ENCODE measurements at regions of chr3 and their contacts with region 1.

Region 1: GRCh38 chr3:108477511-108478147 is 32.8 kb downstream of the MYH15 start:
- DNase-seq: peak; percentile 72
- ATAC-seq: peak; percentile 77
- H3K4me3 ChIP-seq: no peak overlapping the region
- H3K4me3 Mint-ChIP-seq: no peak overlapping the region
- H3K27ac ChIP-seq: no peak overlapping the region
- H3K27ac Mint-ChIP-seq: no peak overlapping the region
- H3K4me1 ChIP-seq: peaks cover 4 to 6% of the 10 kb centered on the region in 2 donors
- H3K4me1 Mint-ChIP-seq: peaks cover 12% of the 10 kb centered on the region
- H3K27me3 ChIP-seq: no peaks in the 10 kb centered on the region
- H3K27me3 Mint-ChIP-seq: peaks cover 4% of the 10 kb centered on the region
- CTCF ChIP-seq: peak; percentile 89

Region 2: GRCh38 chr3:107660306-107660976 is 817.2 kb before region 1 on chr3:
- CTCF ChIA-PET with region 1: interaction called, 20 read pairs
- POLR2A ChIA-PET with region 1: no interaction called
- intact Hi-C with region 1: no loop called
- DNase-seq: peak; percentile 51
- ATAC-seq: no peak
- H3K4me3 ChIP-seq: no peak overlapping the region
- H3K4me3 Mint-ChIP-seq: no peak overlapping the region
- H3K27ac ChIP-seq: no peak overlapping the region
- H3K27ac Mint-ChIP-seq: no peak overlapping the region
- H3K4me1 ChIP-seq: peaks cover 8% of the 10 kb centered on the region in 2 donors
- H3K4me1 Mint-ChIP-seq: peaks cover 25% of the 10 kb centered on the region
- H3K27me3 ChIP-seq: no peaks in the 10 kb centered on the region
- H3K27me3 Mint-ChIP-seq: no peaks in the 10 kb centered on the region
- CTCF ChIP-seq: peak; percentile 83

Region 3: GRCh38 chr3:107690522-107691138 is 787.0 kb before region 1 on chr3:
- CTCF ChIA-PET with region 1: interaction called, 4 read pairs
- POLR2A ChIA-PET with region 1: no interaction called
- intact Hi-C with region 1: loop called (anchors 2 kb)
- DNase-seq: peak; percentile 66
- ATAC-seq: peak; percentile 64
- H3K4me3 ChIP-seq: no peak overlapping the region
- H3K4me3 Mint-ChIP-seq: no peak overlapping the region
- H3K27ac ChIP-seq: no peak overlapping the region
- H3K27ac Mint-ChIP-seq: no peak overlapping the region
- H3K4me1 ChIP-seq: peaks cover 0 to 2% of the 10 kb centered on the region in 2 donors
- H3K4me1 Mint-ChIP-seq: peaks cover 6% of the 10 kb centered on the region
- H3K27me3 ChIP-seq: no peaks in the 10 kb centered on the region
- H3K27me3 Mint-ChIP-seq: no peaks in the 10 kb centered on the region
- CTCF ChIP-seq: peak; percentile 70

Region 4: DNA sequence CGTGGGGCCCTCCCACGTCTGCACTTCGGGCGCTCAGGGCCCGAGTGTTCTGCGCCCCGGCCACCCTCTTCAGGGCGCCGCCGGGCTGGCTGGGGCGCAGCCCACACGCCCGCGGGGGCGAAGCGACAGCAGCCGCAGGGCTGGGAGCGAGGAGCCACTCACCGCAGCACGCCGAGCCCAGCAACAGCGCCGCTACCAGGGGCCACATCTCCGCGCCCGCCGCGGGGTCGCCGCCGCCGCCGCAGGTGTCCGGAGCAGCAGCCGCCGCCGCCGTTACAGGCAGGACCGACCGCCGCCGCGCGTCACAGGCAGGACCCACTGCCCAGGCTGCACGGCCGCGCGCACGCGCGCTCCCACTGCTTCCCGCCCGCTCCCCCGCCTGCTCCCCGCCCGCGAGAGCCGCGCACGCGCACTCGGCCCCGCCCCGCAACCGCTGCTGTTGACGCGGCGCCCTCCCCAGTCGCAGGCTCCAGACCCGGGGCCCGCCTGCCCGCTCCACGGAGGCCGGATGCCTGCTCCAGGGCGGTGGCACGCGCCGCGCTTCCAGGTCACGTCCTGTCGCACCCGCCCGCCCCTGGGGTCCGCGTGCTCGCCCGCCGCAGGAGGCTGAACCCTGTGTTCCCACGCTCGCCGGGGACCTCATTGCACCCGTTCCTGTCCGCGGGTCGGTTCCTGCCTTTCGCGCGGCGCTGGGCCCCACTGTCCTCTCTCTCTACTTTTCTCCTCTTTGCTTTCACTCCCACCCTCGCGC is 386.8 kb before region 1 on chr3 and contains the start of gene CD47:
- CTCF ChIA-PET with region 1: no interaction called
- POLR2A ChIA-PET with region 1: no interaction called
- intact Hi-C with region 1: loop called (anchors 10 kb)
- DNase-seq: peak; percentile 96
- ATAC-seq: peak; percentile 76
- H3K4me3 ChIP-seq: peak within 1 kb of the TSS; percentile 76 to 98 (median 96)
- H3K4me3 Mint-ChIP-seq: peak within 1 kb of the TSS; percentile 99
- H3K27ac ChIP-seq: peak within 1 kb of the TSS; percentile 89 to 97
- H3K27ac Mint-ChIP-seq: peak within 1 kb of the TSS; percentile 99
- H3K4me1 ChIP-seq: peaks cover 35 to 40% of the 10 kb centered on the region in 2 donors
- H3K4me1 Mint-ChIP-seq: peaks cover 25% of the 10 kb centered on the region
- H3K27me3 ChIP-seq: no peaks in the 10 kb centered on the region
- H3K27me3 Mint-ChIP-seq: no peaks in the 10 kb centered on the region
- CTCF ChIP-seq: no peak
- total RNA-seq, gene CD47: 259 and 260 TPM in 2 replicates

Region 5: DNA sequence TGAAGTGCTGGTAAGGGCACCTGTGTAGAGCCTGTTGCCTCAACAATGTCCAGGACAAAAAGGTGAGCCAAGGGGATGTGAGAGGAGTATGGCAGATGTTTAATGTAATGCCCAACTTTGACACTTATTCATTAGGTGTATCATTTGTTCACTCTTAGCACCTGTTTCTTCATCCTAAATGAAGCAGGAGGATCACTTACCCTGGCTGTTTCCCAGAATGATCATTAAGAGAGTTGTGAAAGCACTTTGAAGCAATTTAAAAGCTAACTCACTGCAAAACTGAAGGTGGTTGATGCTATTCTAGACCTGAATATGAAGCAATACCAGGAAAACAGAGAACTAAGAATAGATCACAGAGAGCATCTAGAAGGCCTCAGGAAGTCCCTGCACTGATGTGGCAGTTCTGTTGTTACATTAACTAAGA is 184.7 kb before region 1 on chr3:
- CTCF ChIA-PET with region 1: no interaction called
- POLR2A ChIA-PET with region 1: no interaction called
- intact Hi-C with region 1: no loop called
- DNase-seq: no peak
- ATAC-seq: no peak
- H3K4me3 ChIP-seq: no peak overlapping the region
- H3K4me3 Mint-ChIP-seq: peak overlapping the region; percentile 20
- H3K27ac ChIP-seq: no peak overlapping the region
- H3K27ac Mint-ChIP-seq: peak overlapping the region; percentile 10
- H3K4me1 ChIP-seq: peaks cover 17 to 19% of the 10 kb centered on the region in 2 donors
- H3K4me1 Mint-ChIP-seq: peaks cover 38% of the 10 kb centered on the region
- H3K27me3 ChIP-seq: no peaks in the 10 kb centered on the region
- H3K27me3 Mint-ChIP-seq: no peaks in the 10 kb centered on the region
- CTCF ChIP-seq: no peak

Region 6: DNA sequence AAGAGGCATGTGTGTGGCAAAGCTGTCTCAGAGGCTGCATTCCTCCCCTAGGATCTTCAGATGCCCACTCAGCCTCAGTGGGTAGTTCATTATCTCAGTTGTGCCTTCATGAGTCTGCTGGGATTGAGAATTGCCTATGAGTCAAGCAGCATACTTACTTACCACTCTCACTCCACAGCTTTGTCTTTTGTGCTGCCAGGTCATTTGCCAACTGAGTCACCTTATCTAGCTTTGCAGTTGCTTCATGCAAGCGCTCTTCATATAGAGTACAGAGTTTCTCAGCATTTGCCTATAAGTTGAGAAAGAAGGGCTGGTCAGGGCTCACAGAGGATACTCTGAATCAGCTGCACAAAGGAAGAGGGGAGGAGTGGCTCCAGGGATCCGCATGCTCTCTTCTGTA is 56.7 kb before region 1 on chr3:
- CTCF ChIA-PET with region 1: no interaction called
- POLR2A ChIA-PET with region 1: no interaction called
- intact Hi-C with region 1: no loop called
- DNase-seq: no peak
- ATAC-seq: no peak
- H3K4me3 ChIP-seq: no peak overlapping the region
- H3K4me3 Mint-ChIP-seq: no peak overlapping the region
- H3K27ac ChIP-seq: no peak overlapping the region
- H3K27ac Mint-ChIP-seq: no peak overlapping the region
- H3K4me1 ChIP-seq: peaks cover 0 to 3% of the 10 kb centered on the region in 2 donors
- H3K4me1 Mint-ChIP-seq: peaks cover 3% of the 10 kb centered on the region
- H3K27me3 ChIP-seq: no peaks in the 10 kb centered on the region
- H3K27me3 Mint-ChIP-seq: peaks cover 5% of the 10 kb centered on the region
- CTCF ChIP-seq: no peak

Region 7: DNA sequence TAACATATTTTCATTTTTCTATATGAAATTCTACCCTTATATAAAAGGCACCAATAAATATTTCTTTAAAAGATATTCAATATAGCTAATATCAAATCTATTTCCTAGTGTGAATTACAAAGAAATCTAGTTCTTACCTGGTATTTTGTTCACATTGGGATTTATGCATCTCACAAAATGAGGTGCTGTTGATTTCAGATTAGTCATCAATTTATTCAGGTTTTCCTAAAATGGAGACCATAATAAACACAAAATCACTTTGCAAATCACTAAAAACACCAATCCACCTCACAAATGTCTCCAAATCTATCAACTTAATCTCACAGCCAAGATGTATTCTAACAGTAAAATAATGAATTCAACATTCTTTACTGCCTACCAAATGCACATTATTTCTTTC is 18.4 kb before region 1 on chr3:
- CTCF ChIA-PET with region 1: interaction called, 16 read pairs
- POLR2A ChIA-PET with region 1: interaction called, 3 read pairs
- intact Hi-C with region 1: no loop called
- DNase-seq: no peak
- ATAC-seq: no peak
- H3K4me3 ChIP-seq: no peak overlapping the region
- H3K4me3 Mint-ChIP-seq: no peak overlapping the region
- H3K27ac ChIP-seq: no peak overlapping the region
- H3K27ac Mint-ChIP-seq: no peak overlapping the region
- H3K4me1 ChIP-seq: peaks cover 4% of the 10 kb centered on the region in 2 donors
- H3K4me1 Mint-ChIP-seq: peaks cover 7% of the 10 kb centered on the region
- H3K27me3 ChIP-seq: no peaks in the 10 kb centered on the region
- H3K27me3 Mint-ChIP-seq: no peaks in the 10 kb centered on the region
- CTCF ChIP-seq: no peak

Region 8: GRCh38 chr3:108505811-108506210 is 28.2 kb after region 1 on chr3:
- CTCF ChIA-PET with region 1: interaction called, 11 read pairs
- POLR2A ChIA-PET with region 1: interaction called, 4 read pairs
- intact Hi-C with region 1: no loop called
- DNase-seq: no peak
- ATAC-seq: no peak
- H3K4me3 ChIP-seq: no peak overlapping the region
- H3K4me3 Mint-ChIP-seq: no peak overlapping the region
- H3K27ac ChIP-seq: no peak overlapping the region
- H3K27ac Mint-ChIP-seq: no peak overlapping the region
- H3K4me1 ChIP-seq: no peaks in the 10 kb centered on the region
- H3K4me1 Mint-ChIP-seq: no peaks in the 10 kb centered on the region
- H3K27me3 ChIP-seq: no peaks in the 10 kb centered on the region
- H3K27me3 Mint-ChIP-seq: no peaks in the 10 kb centered on the region
- CTCF ChIP-seq: no peak

Region 9: GRCh38 chr3:108605491-108605890 is 127.9 kb after region 1 on chr3:
- CTCF ChIA-PET with region 1: no interaction called
- POLR2A ChIA-PET with region 1: no interaction called
- intact Hi-C with region 1: no loop called
- DNase-seq: no peak
- ATAC-seq: no peak
- H3K4me3 ChIP-seq: no peak overlapping the region
- H3K4me3 Mint-ChIP-seq: no peak overlapping the region
- H3K27ac ChIP-seq: no peak overlapping the region
- H3K27ac Mint-ChIP-seq: no peak overlapping the region
- H3K4me1 ChIP-seq: peaks cover 29 to 32% of the 10 kb centered on the region in 2 donors
- H3K4me1 Mint-ChIP-seq: peaks cover 27% of the 10 kb centered on the region
- H3K27me3 ChIP-seq: no peaks in the 10 kb centered on the region
- H3K27me3 Mint-ChIP-seq: no peaks in the 10 kb centered on the region
- CTCF ChIP-seq: no peak

Measured in B cell (primary cell).